CD8-positive, alpha-beta T cell (primary cell): ENCODE measurements at regions of chr1 and their contacts with region 1.

Region 1: GRCh38 chr1:204516180-204516879 is at the start of gene MDM4:
- DNase-seq: peak; percentile 85 to 97 (median 90)
- ATAC-seq: peak; percentile 76
- H3K4me3 ChIP-seq: peak within 1 kb of the TSS; percentile 63 to 88
- H3K4me3 Mint-ChIP-seq: no peak within 1 kb of the TSS
- H3K27ac ChIP-seq: peak within 1 kb of the TSS; percentile 89 to 97
- H3K27ac Mint-ChIP-seq: no peak within 1 kb of the TSS
- H3K4me1 ChIP-seq: peaks cover 77% of the 10 kb centered on the region
- H3K4me1 Mint-ChIP-seq: peaks cover 65% of the 10 kb centered on the region
- H3K27me3 ChIP-seq: no peaks in the 10 kb centered on the region
- H3K27me3 Mint-ChIP-seq: no peaks in the 10 kb centered on the region
- CTCF ChIP-seq: no peak
- total RNA-seq, gene MDM4: 209 to 218 TPM

Region 2: GRCh38 chr1:203326830-203327683 is 1189.3 kb before region 1 on chr1:
- CTCF ChIA-PET with region 1: no interaction called
- POLR2A ChIA-PET with region 1: interaction called, 3 read pairs
- intact Hi-C with region 1: loop called in 1 of 2 experiments (anchors 10 kb)
- DNase-seq: peak; percentile 86 to 97 (median 94)
- ATAC-seq: peak; percentile 67
- H3K4me3 ChIP-seq: peak overlapping the region; percentile 58 to 60
- H3K4me3 Mint-ChIP-seq: peak overlapping the region; percentile 74
- H3K27ac ChIP-seq: peak overlapping the region; percentile 92 to 97
- H3K27ac Mint-ChIP-seq: peak overlapping the region; percentile 93
- H3K4me1 ChIP-seq: peaks cover 65% of the 10 kb centered on the region
- H3K4me1 Mint-ChIP-seq: peaks cover 65% of the 10 kb centered on the region
- H3K27me3 ChIP-seq: no peaks in the 10 kb centered on the region
- H3K27me3 Mint-ChIP-seq: no peaks in the 10 kb centered on the region
- CTCF ChIP-seq: no peak

Region 3: GRCh38 chr1:204494281-204495077 is 21.9 kb before region 1 on chr1 and contains the start of gene PIK3C2B:
- CTCF ChIA-PET with region 1: interaction called, 3 read pairs
- POLR2A ChIA-PET with region 1: interaction called, 31 read pairs
- intact Hi-C with region 1: no loop called
- DNase-seq: peak; percentile 29 to 86 (median 69)
- ATAC-seq: peak; percentile 69
- H3K4me3 ChIP-seq: peak within 1 kb of the TSS; percentile 64 to 86
- H3K4me3 Mint-ChIP-seq: peak within 1 kb of the TSS; percentile 94
- H3K27ac ChIP-seq: peak within 1 kb of the TSS; percentile 63 to 72
- H3K27ac Mint-ChIP-seq: peak within 1 kb of the TSS; percentile 96
- H3K4me1 ChIP-seq: peaks cover 29% of the 10 kb centered on the region
- H3K4me1 Mint-ChIP-seq: peaks cover 52% of the 10 kb centered on the region
- H3K27me3 ChIP-seq: no peaks in the 10 kb centered on the region
- H3K27me3 Mint-ChIP-seq: no peaks in the 10 kb centered on the region
- CTCF ChIP-seq: no peak
- total RNA-seq, gene PIK3C2B: 32.2 to 32.6 TPM

Region 4: DNA sequence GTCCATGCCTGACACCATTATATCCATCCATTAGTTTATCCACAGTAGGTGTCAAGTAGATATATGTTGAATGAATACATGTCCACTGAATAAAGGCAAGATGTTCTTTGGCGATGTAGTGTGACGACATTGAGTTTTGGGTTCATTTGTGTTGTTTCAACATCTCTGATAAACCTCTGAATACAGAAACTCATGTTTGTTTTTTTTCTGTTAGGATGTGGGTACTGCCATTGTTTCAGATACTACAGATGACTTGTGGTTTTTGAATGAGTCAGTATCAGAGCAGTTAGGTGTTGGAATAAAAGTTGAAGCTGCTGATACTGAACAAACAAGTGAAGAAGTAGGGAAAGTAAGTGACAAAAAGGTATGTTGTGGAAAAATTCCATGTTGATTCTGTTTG is 28.0 kb after region 1 on chr1:
- CTCF ChIA-PET with region 1: interaction called, 4 read pairs
- POLR2A ChIA-PET with region 1: interaction called, 23 read pairs
- intact Hi-C with region 1: loop called (anchors 1 to 2 kb)
- DNase-seq: peak in 2 of 9 experiments; percentile 63 to 78
- ATAC-seq: peak; percentile 91
- H3K4me3 ChIP-seq: no peak overlapping the region
- H3K4me3 Mint-ChIP-seq: peak overlapping the region; percentile 8
- H3K27ac ChIP-seq: peak overlapping the region; percentile 24 to 86
- H3K27ac Mint-ChIP-seq: peak overlapping the region; percentile 88
- H3K4me1 ChIP-seq: peaks cover 51% of the 10 kb centered on the region
- H3K4me1 Mint-ChIP-seq: peaks cover 60% of the 10 kb centered on the region
- H3K27me3 ChIP-seq: no peaks in the 10 kb centered on the region
- H3K27me3 Mint-ChIP-seq: no peaks in the 10 kb centered on the region
- CTCF ChIP-seq: no peak

Region 5: GRCh38 chr1:204556458-204557052 is 40.2 kb after region 1 on chr1:
- CTCF ChIA-PET with region 1: interaction called, 4 read pairs
- POLR2A ChIA-PET with region 1: interaction called, 13 read pairs
- intact Hi-C with region 1: no loop called
- DNase-seq: peak in 2 of 9 experiments; percentile 8 to 53
- ATAC-seq: peak; percentile 72
- H3K4me3 ChIP-seq: no peak overlapping the region
- H3K4me3 Mint-ChIP-seq: peak overlapping the region; percentile 20
- H3K27ac ChIP-seq: peak overlapping the region in 1 of 2 experiments; percentile 28
- H3K27ac Mint-ChIP-seq: peak overlapping the region; percentile 84
- H3K4me1 ChIP-seq: peaks cover 18% of the 10 kb centered on the region
- H3K4me1 Mint-ChIP-seq: peaks cover 45% of the 10 kb centered on the region
- H3K27me3 ChIP-seq: no peaks in the 10 kb centered on the region
- H3K27me3 Mint-ChIP-seq: no peaks in the 10 kb centered on the region
- CTCF ChIP-seq: no peak

Region 6: DNA sequence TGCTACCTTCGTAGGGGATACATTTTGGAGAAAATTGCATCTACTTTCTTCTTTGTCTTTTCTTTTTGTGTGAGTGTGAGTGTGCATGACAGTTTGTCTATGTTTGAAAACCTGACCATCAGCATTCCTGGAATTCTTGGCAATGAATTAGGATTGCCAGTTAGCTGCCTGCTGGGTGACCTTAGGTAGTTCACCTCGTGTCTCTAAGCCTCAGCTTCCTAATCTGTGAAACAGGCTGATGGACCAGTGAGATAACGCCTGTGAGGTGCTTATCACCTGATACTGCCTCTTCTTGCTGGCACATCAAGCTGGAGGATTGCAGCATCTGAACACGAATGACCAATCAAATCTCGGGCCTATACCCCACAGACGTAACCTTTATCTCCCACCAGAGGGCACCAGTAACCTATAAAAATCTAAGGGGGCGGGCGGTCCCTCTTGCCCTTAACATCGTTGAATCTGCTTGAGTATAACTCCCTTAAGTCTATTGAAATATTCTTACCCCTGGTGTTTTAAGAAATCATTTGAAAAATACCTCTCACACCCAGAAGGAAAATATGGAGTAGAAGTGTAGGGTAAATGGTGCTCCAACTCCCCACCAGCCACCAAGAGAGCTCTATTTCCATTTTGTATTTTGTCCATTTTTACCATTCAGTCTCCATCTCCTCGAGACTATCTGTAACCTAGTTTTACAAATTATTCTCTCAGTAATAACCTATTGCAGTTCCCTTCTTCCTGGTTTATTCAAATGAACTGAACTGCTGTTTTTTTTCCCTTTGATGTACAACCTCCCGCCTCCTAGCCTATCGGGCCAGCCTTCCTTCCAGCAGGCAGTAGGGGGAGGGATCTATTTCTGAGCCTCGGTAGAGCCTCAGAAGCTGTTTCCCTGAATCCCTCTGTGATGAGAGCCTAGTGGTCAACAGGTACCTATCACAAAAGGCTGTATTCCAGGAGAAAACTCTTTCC is 49.6 kb after region 1 on chr1:
- CTCF ChIA-PET with region 1: interaction called, 9 read pairs
- POLR2A ChIA-PET with region 1: interaction called, 11 read pairs
- intact Hi-C with region 1: no loop called
- DNase-seq: peak; percentile 25 to 84 (median 55)
- ATAC-seq: peak; percentile 93
- H3K4me3 ChIP-seq: no peak overlapping the region
- H3K4me3 Mint-ChIP-seq: no peak overlapping the region
- H3K27ac ChIP-seq: peak overlapping the region in 1 of 2 experiments; percentile 9
- H3K27ac Mint-ChIP-seq: peak overlapping the region; percentile 10
- H3K4me1 ChIP-seq: peaks cover 35% of the 10 kb centered on the region
- H3K4me1 Mint-ChIP-seq: peaks cover 52% of the 10 kb centered on the region
- H3K27me3 ChIP-seq: no peaks in the 10 kb centered on the region
- H3K27me3 Mint-ChIP-seq: no peaks in the 10 kb centered on the region
- CTCF ChIP-seq: peak; percentile 70

Region 7: DNA sequence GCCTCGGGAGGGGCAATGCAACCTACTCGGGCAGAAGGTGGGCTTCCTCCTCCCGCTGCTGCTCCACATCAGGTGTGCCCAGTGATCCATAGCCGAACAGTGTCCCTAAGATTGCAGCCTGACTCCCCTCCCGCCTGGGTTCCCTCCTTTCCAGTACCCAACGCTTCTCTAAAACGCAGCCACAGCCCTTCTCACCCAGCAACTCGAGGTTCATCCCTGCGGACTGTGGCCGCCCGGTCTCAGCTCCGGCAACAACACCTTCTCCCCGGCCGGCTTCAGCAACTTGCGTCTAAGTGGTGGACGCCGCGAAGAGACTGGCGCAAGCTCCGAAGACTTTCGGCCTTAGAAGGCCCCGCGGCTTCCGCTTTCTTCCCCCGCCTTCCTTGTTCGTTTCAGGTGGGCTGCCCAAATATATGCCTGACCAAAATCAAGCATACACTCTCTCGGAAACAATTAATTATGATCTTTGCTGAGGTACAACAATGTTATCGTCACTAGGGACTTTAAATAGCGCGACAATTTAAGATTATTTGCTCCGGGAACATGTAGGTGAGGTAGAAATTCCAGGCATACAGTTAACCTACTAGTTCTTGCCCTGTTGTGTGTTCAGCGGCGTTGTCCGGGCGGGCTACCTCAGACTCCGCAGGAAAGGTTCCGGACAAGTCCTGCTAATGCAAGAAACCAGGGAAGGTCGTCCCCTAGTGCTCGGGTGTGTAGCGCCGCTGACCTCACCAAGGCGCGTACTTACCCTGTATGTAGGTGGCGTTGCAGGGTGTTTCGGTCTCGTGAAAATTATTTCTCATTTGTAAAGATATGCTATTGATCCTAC is 605.5 kb after region 1 on chr1 and contains the start of gene RBBP5:
- CTCF ChIA-PET with region 1: no interaction called
- POLR2A ChIA-PET with region 1: no interaction called
- intact Hi-C with region 1: loop called in 1 of 2 experiments (anchors 10 kb)
- DNase-seq: peak; percentile 92 to 98 (median 95)
- ATAC-seq: peak; percentile 93
- H3K4me3 ChIP-seq: peak within 1 kb of the TSS; percentile 91 to 95
- H3K4me3 Mint-ChIP-seq: peak within 1 kb of the TSS; percentile 96
- H3K27ac ChIP-seq: peak within 1 kb of the TSS; percentile 88 to 97
- H3K27ac Mint-ChIP-seq: peak within 1 kb of the TSS; percentile 100
- H3K4me1 ChIP-seq: peaks cover 26% of the 10 kb centered on the region
- H3K4me1 Mint-ChIP-seq: peaks cover 46% of the 10 kb centered on the region
- H3K27me3 ChIP-seq: no peaks in the 10 kb centered on the region
- H3K27me3 Mint-ChIP-seq: no peaks in the 10 kb centered on the region
- CTCF ChIP-seq: peak; percentile 59
- total RNA-seq, gene RBBP5: 23.9 to 25.7 TPM